IMR-90 (cell line): ENCODE measurements at regions of chr1 and their contacts with region 1.

Region 1: GRCh38 chr1:226634166-226634588 is 85.6 kb downstream of the STUM start:
- DNase-seq: peak; percentile 59
- ATAC-seq: peak; percentile 95
- H3K4me3 ChIP-seq: no peak overlapping the region
- H3K27ac ChIP-seq: no peak overlapping the region
- H3K4me1 ChIP-seq: no peaks in the 10 kb centered on the region
- H3K27me3 ChIP-seq: no peaks in the 10 kb centered on the region; the same call in 1 of the 2 replicates
- CTCF ChIP-seq: peak; percentile 91
- POLR2A ChIP-seq: no peak
- RAD21 ChIP-seq: peak; percentile 97

Region 2: DNA sequence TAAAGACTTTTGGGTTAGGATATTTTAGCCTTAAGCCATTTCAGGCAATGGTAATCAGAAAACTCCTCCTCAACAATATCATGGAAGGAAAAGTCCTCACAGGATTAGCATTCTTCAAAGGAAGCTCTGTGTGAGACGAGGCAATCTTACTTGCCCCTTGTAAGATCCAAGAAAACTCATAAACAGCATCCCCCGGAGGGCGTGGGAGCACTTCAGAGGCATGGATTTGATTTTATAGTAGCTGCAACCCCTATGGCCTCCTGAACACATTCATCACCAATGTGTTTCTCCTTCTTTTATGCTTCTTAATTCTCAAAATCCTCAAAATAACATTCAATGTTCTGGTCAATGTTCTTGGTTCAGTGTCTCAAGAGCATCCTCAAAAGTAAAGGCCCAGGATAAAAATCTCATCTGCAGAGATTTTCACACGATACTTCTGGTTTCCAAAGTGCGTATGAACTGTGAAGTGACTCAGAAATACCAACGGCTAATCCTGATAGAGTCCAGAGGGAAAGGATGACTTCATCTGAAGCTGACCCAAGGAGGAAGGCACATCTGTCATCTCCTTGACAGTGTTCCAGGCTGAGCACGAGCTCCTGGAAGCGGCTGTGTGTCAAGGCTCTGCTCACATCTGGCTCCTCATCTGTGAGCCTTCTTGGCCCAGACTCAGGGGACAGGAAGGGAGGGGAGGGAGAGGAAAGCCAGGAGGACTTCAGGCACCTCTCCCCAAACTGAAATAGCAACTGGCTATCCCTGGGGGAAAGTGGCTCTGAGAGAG is 187.0 kb after region 1 on chr1:
- CTCF ChIA-PET with region 1: no interaction called
- POLR2A ChIA-PET with region 1: no interaction called
- dilution Hi-C with region 1: no loop called
- in situ Hi-C with region 1: loop called (anchors 5 kb)
- intact Hi-C with region 1: no loop called
- DNase-seq: peak; percentile 100
- ATAC-seq: peak; percentile 94
- H3K4me3 ChIP-seq: no peak overlapping the region
- H3K27ac ChIP-seq: peak overlapping the region; percentile 36; the same call in 1 of the 2 replicates
- H3K4me1 ChIP-seq: peaks cover 5% of the 10 kb centered on the region; the same call in 1 of the 2 replicates
- H3K27me3 ChIP-seq: no peaks in the 10 kb centered on the region
- CTCF ChIP-seq: no peak
- POLR2A ChIP-seq: no peak
- RAD21 ChIP-seq: peak; percentile 33; the same call in 1 of the 2 replicates

Region 3: GRCh38 chr1:226827968-226828513 is 193.9 kb after region 1 on chr1:
- CTCF ChIA-PET with region 1: interaction called, 10 read pairs
- POLR2A ChIA-PET with region 1: no interaction called
- dilution Hi-C with region 1: no loop called
- in situ Hi-C with region 1: loop called (anchors 5 kb)
- intact Hi-C with region 1: loop called (anchors 1 kb)
- DNase-seq: peak; percentile 93
- ATAC-seq: peak; percentile 100
- H3K4me3 ChIP-seq: no peak overlapping the region
- H3K27ac ChIP-seq: peak overlapping the region; percentile 76
- H3K4me1 ChIP-seq: peaks cover 2% of the 10 kb centered on the region
- H3K27me3 ChIP-seq: peaks cover 4% of the 10 kb centered on the region; the same call in 1 of the 2 replicates
- CTCF ChIP-seq: peak; percentile 97
- POLR2A ChIP-seq: peak; percentile 51; the same call in 1 of the 2 replicates
- RAD21 ChIP-seq: peak; percentile 98